ENCODE measurements at regions of chr12 and their contacts with region 1.

Region 1: GRCh38 chr12:57771708-57772428 is at the start of gene METTL1:
- DNase-seq: peak; percentile 87
- ATAC-seq: peak; percentile 90
- H3K4me3 Mint-ChIP-seq: peak within 1 kb of the TSS; percentile 96
- H3K27ac Mint-ChIP-seq: peak within 1 kb of the TSS; percentile 96
- H3K4me1 Mint-ChIP-seq: peaks cover 14% of the 10 kb centered on the region
- H3K27me3 Mint-ChIP-seq: no peaks in the 10 kb centered on the region
- total RNA-seq, gene METTL1: 13.9 to 14.9 TPM

Region 2: DNA sequence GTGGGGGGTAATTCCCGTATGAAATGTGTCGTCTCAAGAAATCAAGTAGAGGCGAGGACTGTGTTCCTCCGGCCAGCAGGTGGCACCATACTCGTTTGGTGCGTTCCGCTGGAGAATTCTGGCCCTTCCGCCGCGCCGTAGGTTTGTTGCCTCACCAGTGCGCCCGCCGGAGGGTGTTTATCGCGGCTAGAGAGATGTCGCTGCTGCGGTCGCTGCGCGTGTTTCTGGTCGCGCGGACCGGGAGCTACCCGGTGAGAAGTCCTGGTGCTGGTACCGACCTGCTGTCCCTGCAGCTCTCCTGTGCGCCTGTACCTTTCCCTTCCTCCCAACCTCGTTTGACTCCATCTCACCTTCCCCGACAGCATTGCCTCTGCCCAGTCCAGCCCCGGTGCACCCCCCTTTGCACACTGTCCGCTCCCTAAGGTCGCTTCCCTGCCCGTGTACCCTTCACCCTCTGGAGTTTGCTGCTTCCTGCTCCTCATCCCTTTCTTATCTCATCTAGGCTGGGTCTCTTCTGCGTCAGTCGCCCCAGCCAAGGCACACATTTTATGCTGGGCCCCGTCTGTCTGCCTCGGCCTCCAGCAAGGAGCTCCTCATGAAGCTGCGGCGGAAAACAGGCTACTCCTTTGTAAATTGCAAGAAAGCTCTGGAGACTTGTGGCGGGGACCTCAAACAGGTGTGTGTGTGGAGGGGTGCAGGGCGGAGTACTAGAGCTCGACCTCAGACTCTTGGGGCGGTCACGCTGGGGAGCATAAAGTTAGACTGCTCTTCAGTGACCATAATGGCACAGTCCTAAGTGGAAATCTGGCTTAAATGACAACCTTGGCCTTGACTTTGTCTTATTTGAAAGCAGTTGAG is 11.0 kb after region 1 on chr12 and contains the start of gene TSFM:
- POLR2A ChIA-PET with region 1: interaction called, 29 read pairs
- DNase-seq: peak; percentile 98
- ATAC-seq: peak; percentile 88
- H3K4me3 Mint-ChIP-seq: peak within 1 kb of the TSS; percentile 96
- H3K27ac Mint-ChIP-seq: peak within 1 kb of the TSS; percentile 93
- H3K4me1 Mint-ChIP-seq: peaks cover 33% of the 10 kb centered on the region
- H3K27me3 Mint-ChIP-seq: no peaks in the 10 kb centered on the region
- total RNA-seq, gene TSFM: 23.0 to 24.4 TPM

Region 3: GRCh38 chr12:57852620-57853500 is 81.0 kb after region 1 on chr12:
- POLR2A ChIA-PET with region 1: no interaction called
- DNase-seq: no peak
- ATAC-seq: no peak
- H3K4me3 Mint-ChIP-seq: peak overlapping the region; percentile 30
- H3K27ac Mint-ChIP-seq: no peak overlapping the region
- H3K4me1 Mint-ChIP-seq: peaks cover 2% of the 10 kb centered on the region
- H3K27me3 Mint-ChIP-seq: peaks cover 41% of the 10 kb centered on the region